ENCODE measurements at regions of chr1 and their contacts with region 1.

Region 1: GRCh38 chr1:40802078-40802741 is 18.6 kb downstream of the KCNQ4 start:
- DNase-seq: peak; percentile 85 to 88 (median 86)
- H3K4me3 ChIP-seq: peak overlapping the region in 1 of 2 donors; percentile 62
- H3K4me3 Mint-ChIP-seq: peak overlapping the region; percentile 66 to 87 (median 78)
- H3K27ac ChIP-seq: peak overlapping the region; percentile 63
- H3K27ac Mint-ChIP-seq: peak overlapping the region; percentile 22 to 90 (median 86)
- H3K4me1 ChIP-seq: peaks cover 25% of the 10 kb centered on the region
- H3K4me1 Mint-ChIP-seq: peaks cover 16 to 37% (median 28%) of the 10 kb centered on the region in 4 donors
- H3K27me3 ChIP-seq: no peaks in the 10 kb centered on the region
- H3K27me3 Mint-ChIP-seq: no peaks in the 10 kb centered on the region

Region 2: GRCh38 chr1:40539338-40539737 is 262.9 kb before region 1 on chr1:
- CTCF ChIA-PET with region 1: no interaction called
- POLR2A ChIA-PET with region 1: no interaction called
- intact Hi-C with region 1: no loop called
- DNase-seq: no peak
- H3K4me3 ChIP-seq: no peak overlapping the region
- H3K4me3 Mint-ChIP-seq: peak overlapping the region in 1 of 8 donors; percentile 29
- H3K27ac ChIP-seq: no peak overlapping the region
- H3K27ac Mint-ChIP-seq: no peak overlapping the region
- H3K4me1 ChIP-seq: no peaks in the 10 kb centered on the region
- H3K4me1 Mint-ChIP-seq: no peaks in the 10 kb centered on the region
- H3K27me3 ChIP-seq: no peaks in the 10 kb centered on the region
- H3K27me3 Mint-ChIP-seq: no peaks in the 10 kb centered on the region

Region 3: DNA sequence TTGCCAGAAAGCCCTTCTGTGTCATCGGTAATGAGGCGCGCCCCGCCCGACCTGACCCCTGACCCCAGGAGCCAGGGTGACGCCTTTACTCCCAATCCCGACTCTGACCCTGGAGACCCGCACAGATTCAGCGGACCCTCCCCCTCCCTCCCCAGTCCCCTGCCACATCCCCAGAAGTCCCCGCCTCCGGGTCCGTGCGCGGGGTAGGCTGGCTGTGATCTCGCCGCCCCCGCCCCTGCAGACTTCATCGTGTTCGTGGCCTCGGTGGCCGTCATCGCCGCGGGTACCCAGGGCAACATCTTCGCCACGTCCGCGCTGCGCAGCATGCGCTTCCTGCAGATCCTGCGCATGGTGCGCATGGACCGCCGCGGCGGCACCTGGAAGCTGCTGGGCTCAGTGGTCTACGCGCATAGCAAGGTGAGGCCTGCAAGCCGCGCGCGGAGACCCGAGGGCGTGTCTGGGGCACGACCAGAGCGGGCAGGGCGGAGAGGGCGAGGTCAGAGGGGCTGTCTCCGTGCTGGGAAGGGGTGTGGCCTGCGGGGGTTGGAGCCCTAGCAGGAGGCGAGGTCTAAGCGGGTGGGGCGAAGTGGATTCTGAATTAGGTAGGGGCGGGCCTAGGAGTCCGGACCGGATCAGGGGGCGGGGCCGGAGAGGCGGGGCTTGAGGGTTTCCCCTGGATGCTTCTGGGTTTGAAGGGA is 16.2 kb after region 1 on chr1:
- CTCF ChIA-PET with region 1: interaction called, 3 read pairs
- POLR2A ChIA-PET with region 1: no interaction called
- intact Hi-C with region 1: loop called (anchors 1 kb)
- DNase-seq: peak; percentile 84 to 95 (median 90)
- H3K4me3 ChIP-seq: peak overlapping the region; percentile 2 to 62
- H3K4me3 Mint-ChIP-seq: peak overlapping the region; percentile 81 to 90 (median 83)
- H3K27ac ChIP-seq: peak overlapping the region; percentile 28
- H3K27ac Mint-ChIP-seq: peak overlapping the region; percentile 78 to 90 (median 83)
- H3K4me1 ChIP-seq: peaks cover 10% of the 10 kb centered on the region
- H3K4me1 Mint-ChIP-seq: peaks cover 0 to 15% (median 9%) of the 10 kb centered on the region in 4 donors
- H3K27me3 ChIP-seq: no peaks in the 10 kb centered on the region
- H3K27me3 Mint-ChIP-seq: no peaks in the 10 kb centered on the region

Region 4: DNA sequence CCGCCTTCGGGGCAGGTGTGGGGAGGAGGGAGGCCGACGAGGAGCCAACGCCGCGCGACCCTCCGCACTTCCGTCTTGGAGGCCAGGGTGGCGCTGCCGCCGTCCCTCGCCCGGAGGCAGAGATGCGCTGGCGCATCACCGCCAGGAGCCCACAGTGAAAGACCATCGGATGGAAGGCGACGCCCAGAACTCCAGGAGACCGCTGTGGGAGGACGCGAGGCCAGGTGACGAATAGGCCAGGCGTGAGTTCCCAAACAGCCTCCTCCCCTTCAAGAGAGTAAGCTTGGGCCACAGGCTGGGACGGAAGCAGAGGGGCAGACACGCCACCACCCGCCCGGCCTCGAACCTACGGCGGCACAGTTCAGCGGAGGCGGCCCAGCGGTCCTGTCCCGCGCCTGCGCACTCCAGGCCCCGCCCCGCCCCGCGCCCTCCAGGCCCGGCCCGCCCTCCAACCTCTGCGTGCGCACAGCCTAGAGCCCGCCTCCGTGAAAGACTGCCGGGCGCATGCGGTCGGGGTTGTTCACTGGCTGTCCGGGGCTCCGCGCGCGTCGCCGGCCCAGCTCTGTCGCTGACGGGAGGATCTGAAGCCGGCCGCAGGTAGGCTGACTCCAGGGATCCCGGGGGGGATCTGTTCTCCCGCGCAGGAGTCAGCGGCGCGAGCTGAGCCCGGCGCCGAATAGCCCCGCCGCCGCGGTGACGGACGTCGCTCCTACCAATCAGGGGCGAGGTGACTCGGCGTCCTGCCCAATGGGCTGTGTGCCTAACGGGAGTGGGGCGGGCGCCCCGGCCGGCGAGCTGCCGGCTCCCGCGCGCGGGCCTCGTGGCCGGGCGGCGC is 177.2 kb after region 1 on chr1 and contains the start of gene CTPS1:
- CTCF ChIA-PET with region 1: no interaction called
- POLR2A ChIA-PET with region 1: no interaction called
- intact Hi-C with region 1: loop called (anchors 1 kb)
- DNase-seq: peak; percentile 94 to 96 (median 95)
- H3K4me3 ChIP-seq: peak within 1 kb of the TSS; percentile 45 to 80
- H3K4me3 Mint-ChIP-seq: peak within 1 kb of the TSS; percentile 83 to 97 (median 90)
- H3K27ac ChIP-seq: peak within 1 kb of the TSS; percentile 81
- H3K27ac Mint-ChIP-seq: peak within 1 kb of the TSS; percentile 88 to 98 (median 92)
- H3K4me1 ChIP-seq: peaks cover 25% of the 10 kb centered on the region
- H3K4me1 Mint-ChIP-seq: peaks cover 17 to 31% (median 22%) of the 10 kb centered on the region in 4 donors
- H3K27me3 ChIP-seq: no peaks in the 10 kb centered on the region
- H3K27me3 Mint-ChIP-seq: no peaks in the 10 kb centered on the region
- total RNA-seq, gene CTPS1: 18.5 to 19.7 TPM